ENCODE measurements at regions of chr4 and their contacts with region 1.

Region 1: DNA sequence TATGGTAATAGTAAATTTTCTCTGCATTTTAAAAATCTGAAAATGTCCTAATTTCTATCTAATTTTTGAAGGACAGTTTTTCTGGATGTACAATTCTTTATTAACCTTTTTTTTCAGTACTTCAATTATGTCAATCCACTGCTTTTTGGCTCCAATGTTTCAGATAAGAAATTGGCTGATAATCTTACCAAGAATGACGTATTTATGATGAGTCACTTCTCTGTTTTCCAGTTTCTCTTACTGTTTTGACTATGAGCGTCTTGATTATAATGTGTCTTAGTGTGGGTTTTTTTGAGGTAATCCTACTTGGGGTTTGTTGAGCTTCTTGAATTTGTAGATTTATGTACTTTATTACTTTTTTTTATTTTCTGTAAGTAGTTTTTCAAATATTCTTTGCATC is 47.2 kb downstream of the UGT2B11 start:
- DNase-seq: no peak
- ATAC-seq: no peak
- H3K4me3 ChIP-seq: no peak overlapping the region
- H3K4me3 Mint-ChIP-seq: no peak overlapping the region
- H3K27ac ChIP-seq: no peak overlapping the region
- H3K27ac Mint-ChIP-seq: no peak overlapping the region
- H3K4me1 ChIP-seq: no peaks in the 10 kb centered on the region
- H3K4me1 Mint-ChIP-seq: no peaks in the 10 kb centered on the region
- H3K27me3 ChIP-seq: no peaks in the 10 kb centered on the region
- H3K27me3 Mint-ChIP-seq: no peaks in the 10 kb centered on the region
- CTCF ChIP-seq: no peak

Region 2: DNA sequence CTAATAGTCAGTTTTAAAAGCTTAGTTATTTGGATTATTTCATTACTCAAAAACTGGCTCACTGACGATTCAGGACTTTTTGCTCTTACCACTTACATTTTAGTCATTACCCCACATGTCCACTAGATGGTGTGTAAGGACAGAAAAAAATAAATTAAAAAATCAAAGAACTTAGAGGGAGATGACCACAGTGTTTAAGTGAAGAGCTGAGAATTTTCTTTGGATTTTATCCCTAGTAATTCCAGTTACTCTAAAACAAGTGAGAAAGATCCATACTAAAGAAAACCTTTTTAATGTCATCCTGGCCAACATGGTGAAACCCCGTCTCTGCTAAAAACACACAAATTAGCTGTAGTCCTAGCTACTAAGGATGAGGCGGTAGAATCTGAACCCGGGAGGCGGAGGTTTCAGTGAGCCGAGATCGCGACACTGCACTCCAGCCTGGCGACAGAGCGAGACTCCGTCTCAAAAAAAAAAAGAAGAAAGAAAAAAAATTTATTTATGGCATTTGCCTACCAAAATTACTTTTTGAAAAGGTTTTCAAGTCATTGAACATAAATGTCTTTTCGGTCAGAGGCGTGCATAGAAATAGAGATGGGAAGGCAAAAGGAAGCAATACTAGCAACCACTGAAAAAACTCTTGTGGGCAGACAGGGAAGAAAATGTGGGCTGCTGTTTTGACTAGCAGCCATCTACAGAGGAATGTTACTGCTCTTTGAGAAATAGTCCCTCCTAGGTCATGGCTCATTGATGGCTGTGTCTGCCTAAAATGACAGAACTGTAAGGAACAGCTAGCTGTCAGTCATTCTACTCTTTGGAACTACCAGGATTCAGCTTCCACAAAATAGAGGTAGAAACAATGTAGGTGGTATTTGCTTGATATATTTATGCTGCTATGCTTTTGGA is 895.2 kb before region 1 on chr4:
- CTCF ChIA-PET with region 1: no interaction called
- POLR2A ChIA-PET with region 1: no interaction called
- intact Hi-C with region 1: loop called (anchors 5 kb)
- DNase-seq: peak in 3 of 14 experiments; percentile 55 to 61 (median 56)
- ATAC-seq: peak; percentile 56
- H3K4me3 ChIP-seq: no peak overlapping the region
- H3K4me3 Mint-ChIP-seq: peak overlapping the region; percentile 31
- H3K27ac ChIP-seq: no peak overlapping the region
- H3K27ac Mint-ChIP-seq: no peak overlapping the region
- H3K4me1 ChIP-seq: no peaks in the 10 kb centered on the region
- H3K4me1 Mint-ChIP-seq: peaks cover 3% of the 10 kb centered on the region
- H3K27me3 ChIP-seq: peaks cover 0 to 4% of the 10 kb centered on the region in 2 experiments
- H3K27me3 Mint-ChIP-seq: peaks cover 17% of the 10 kb centered on the region
- CTCF ChIP-seq: peak; percentile 85

Region 3: GRCh38 chr4:68278029-68278428 is 889.3 kb before region 1 on chr4:
- CTCF ChIA-PET with region 1: no interaction called
- POLR2A ChIA-PET with region 1: no interaction called
- intact Hi-C with region 1: loop called (anchors 5 kb)
- DNase-seq: no peak
- ATAC-seq: no peak
- H3K4me3 ChIP-seq: no peak overlapping the region
- H3K4me3 Mint-ChIP-seq: no peak overlapping the region
- H3K27ac ChIP-seq: no peak overlapping the region
- H3K27ac Mint-ChIP-seq: no peak overlapping the region
- H3K4me1 ChIP-seq: no peaks in the 10 kb centered on the region
- H3K4me1 Mint-ChIP-seq: no peaks in the 10 kb centered on the region
- H3K27me3 ChIP-seq: no peaks in the 10 kb centered on the region
- H3K27me3 Mint-ChIP-seq: peaks cover 8% of the 10 kb centered on the region
- CTCF ChIP-seq: no peak